IMR-90 (cell line): ENCODE measurements at regions of chr9 and their contacts with region 1.

Region 1: DNA sequence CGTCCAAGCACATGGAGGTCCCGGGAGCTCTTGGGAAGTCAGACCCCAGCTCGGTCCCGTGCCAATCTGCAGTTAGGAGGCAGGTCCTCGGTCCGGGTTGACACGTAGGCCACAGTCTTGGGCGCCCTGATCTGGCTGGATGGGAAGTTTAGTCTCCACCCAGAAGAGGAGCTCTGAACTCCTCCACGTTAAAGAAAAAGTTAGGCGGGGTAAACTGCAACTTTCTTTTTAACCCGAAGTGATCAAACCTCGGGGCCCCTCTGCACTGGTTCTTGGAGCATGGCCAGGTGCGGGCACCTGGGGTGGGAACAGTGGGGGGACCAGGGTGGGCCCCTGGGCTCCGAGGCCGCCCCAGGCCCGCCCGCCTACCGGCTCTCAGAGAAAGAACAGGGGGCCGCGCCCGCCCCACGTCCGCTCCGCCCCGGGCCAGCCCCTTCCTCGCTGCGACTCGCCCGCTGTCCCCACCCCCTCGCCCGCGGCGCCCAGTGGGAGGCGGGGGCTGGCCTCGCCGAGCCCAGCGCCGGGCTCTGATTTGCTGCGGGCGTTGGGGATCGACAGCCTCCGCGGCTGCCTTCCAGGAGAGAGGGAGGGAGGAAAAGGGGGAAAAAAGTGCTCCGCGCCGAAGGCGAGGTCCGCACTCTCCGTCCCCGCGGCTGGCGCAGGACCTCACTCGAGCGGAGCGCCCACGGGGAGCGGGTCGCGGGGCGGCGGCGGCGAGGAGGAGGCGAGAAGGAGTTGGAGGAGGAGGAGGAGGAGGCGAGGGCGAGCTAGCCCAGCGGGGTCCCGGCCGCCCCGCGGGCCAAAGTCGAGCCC is at the start of gene COL5A1:
- DNase-seq: peak; percentile 91
- ATAC-seq: peak; percentile 79
- H3K4me3 ChIP-seq: peak within 1 kb of the TSS; percentile 84
- H3K27ac ChIP-seq: peak within 1 kb of the TSS; percentile 99
- H3K4me1 ChIP-seq: peaks cover 22% of the 10 kb centered on the region
- H3K27me3 ChIP-seq: no peaks in the 10 kb centered on the region
- CTCF ChIP-seq: no peak; the same call in 1 of the 2 replicates
- POLR2A ChIP-seq: peak; percentile 96
- RAD21 ChIP-seq: no peak; the same call in 1 of the 2 replicates
- total RNA-seq, gene COL5A1: 19.2 and 21.1 TPM in 2 replicates

Region 2: GRCh38 chr9:134163353-134164196 is 477.8 kb before region 1 on chr9:
- CTCF ChIA-PET with region 1: no interaction called
- POLR2A ChIA-PET with region 1: no interaction called
- dilution Hi-C with region 1: no loop called
- in situ Hi-C with region 1: no loop called
- intact Hi-C with region 1: loop called (anchors 10 kb)
- DNase-seq: peak; percentile 22
- ATAC-seq: no peak
- H3K4me3 ChIP-seq: peak overlapping the region; percentile 24
- H3K27ac ChIP-seq: peak overlapping the region; percentile 67
- H3K4me1 ChIP-seq: peaks cover 5% of the 10 kb centered on the region
- H3K27me3 ChIP-seq: no peaks in the 10 kb centered on the region
- CTCF ChIP-seq: no peak
- POLR2A ChIP-seq: no peak
- RAD21 ChIP-seq: no peak

Region 3: GRCh38 chr9:134455934-134456739 is 185.2 kb before region 1 on chr9:
- CTCF ChIA-PET with region 1: interaction called, 5 read pairs
- POLR2A ChIA-PET with region 1: interaction called, 7 read pairs
- dilution Hi-C with region 1: no loop called
- in situ Hi-C with region 1: loop called (anchors 5 kb)
- intact Hi-C with region 1: loop called (anchors 1 kb)
- DNase-seq: peak; percentile 99
- ATAC-seq: peak; percentile 72
- H3K4me3 ChIP-seq: no peak overlapping the region
- H3K27ac ChIP-seq: peak overlapping the region; percentile 94
- H3K4me1 ChIP-seq: peaks cover 30% of the 10 kb centered on the region
- H3K27me3 ChIP-seq: no peaks in the 10 kb centered on the region
- CTCF ChIP-seq: no peak; the same call in 1 of the 2 replicates
- POLR2A ChIP-seq: peak; percentile 62; the same call in 1 of the 2 replicates
- RAD21 ChIP-seq: peak; percentile 50; the same call in 1 of the 2 replicates

Region 4: GRCh38 chr9:134502809-134503211 is 138.6 kb before region 1 on chr9:
- CTCF ChIA-PET with region 1: interaction called, 3 read pairs
- POLR2A ChIA-PET with region 1: interaction called, 3 read pairs
- dilution Hi-C with region 1: no loop called
- in situ Hi-C with region 1: no loop called
- intact Hi-C with region 1: loop called (anchors 2 kb)
- DNase-seq: peak; percentile 99
- ATAC-seq: peak; percentile 99
- H3K4me3 ChIP-seq: no peak overlapping the region
- H3K27ac ChIP-seq: peak overlapping the region; percentile 92
- H3K4me1 ChIP-seq: peaks cover 16% of the 10 kb centered on the region
- H3K27me3 ChIP-seq: no peaks in the 10 kb centered on the region
- CTCF ChIP-seq: no peak
- POLR2A ChIP-seq: peak; percentile 58
- RAD21 ChIP-seq: peak; percentile 50

Region 5: DNA sequence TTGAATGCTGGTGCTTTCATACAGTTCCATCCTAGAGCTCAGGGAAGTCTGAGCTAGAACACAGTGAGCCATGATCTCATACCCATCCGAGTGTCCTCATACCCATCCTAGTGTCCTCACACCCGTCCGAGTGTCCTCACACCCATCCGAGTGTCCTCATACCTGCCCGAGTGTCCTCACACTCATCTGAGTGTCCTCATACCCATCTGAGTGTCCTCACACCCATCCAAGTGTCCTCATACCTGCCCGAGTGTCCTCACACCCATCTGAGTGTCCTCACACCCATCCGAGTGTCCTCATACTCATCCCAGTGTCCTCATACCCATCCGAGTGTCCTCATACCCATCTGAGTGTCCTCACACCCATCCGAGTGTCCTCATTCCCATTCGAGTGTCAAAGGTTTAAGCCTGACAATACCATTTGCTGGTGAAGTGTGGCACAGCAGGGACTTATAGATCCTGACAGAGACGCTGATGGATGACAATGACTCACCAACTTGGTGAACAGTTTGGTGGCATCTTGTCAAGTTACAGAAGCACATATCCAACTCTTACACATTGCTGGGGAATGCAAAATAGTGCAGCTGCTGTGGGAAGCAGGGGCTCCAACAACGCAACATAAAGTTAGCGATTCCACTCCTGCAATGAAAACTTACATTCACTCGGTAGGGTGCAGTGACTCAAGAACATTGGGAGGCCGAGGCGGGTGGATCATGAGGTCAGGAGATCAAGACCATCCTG is 76.8 kb before region 1 on chr9:
- CTCF ChIA-PET with region 1: no interaction called
- POLR2A ChIA-PET with region 1: interaction called, 4 read pairs
- dilution Hi-C with region 1: no loop called
- in situ Hi-C with region 1: no loop called
- intact Hi-C with region 1: loop called (anchors 5 kb)
- DNase-seq: peak; percentile 94
- ATAC-seq: peak; percentile 60
- H3K4me3 ChIP-seq: no peak overlapping the region
- H3K27ac ChIP-seq: no peak overlapping the region
- H3K4me1 ChIP-seq: peaks cover 11% of the 10 kb centered on the region
- H3K27me3 ChIP-seq: no peaks in the 10 kb centered on the region
- CTCF ChIP-seq: no peak
- POLR2A ChIP-seq: no peak
- RAD21 ChIP-seq: no peak

Region 6: GRCh38 chr9:134575525-134576176 is 65.7 kb before region 1 on chr9:
- CTCF ChIA-PET with region 1: no interaction called
- POLR2A ChIA-PET with region 1: no interaction called
- dilution Hi-C with region 1: no loop called
- in situ Hi-C with region 1: no loop called
- intact Hi-C with region 1: no loop called
- DNase-seq: no peak
- ATAC-seq: peak; percentile 40
- H3K4me3 ChIP-seq: no peak overlapping the region
- H3K27ac ChIP-seq: no peak overlapping the region
- H3K4me1 ChIP-seq: peaks cover 14% of the 10 kb centered on the region
- H3K27me3 ChIP-seq: 0 out of 2 replicates have a peak, but pooled peaks cover 1% of the 10 kb centered on the region
- CTCF ChIP-seq: no peak
- POLR2A ChIP-seq: no peak
- RAD21 ChIP-seq: no peak

Region 7: GRCh38 chr9:134660407-134660806 is 19.0 kb after region 1 on chr9:
- CTCF ChIA-PET with region 1: no interaction called
- POLR2A ChIA-PET with region 1: no interaction called
- dilution Hi-C with region 1: no loop called
- in situ Hi-C with region 1: no loop called
- intact Hi-C with region 1: loop called (anchors 2 kb)
- DNase-seq: no peak
- ATAC-seq: no peak
- H3K4me3 ChIP-seq: no peak overlapping the region
- H3K27ac ChIP-seq: no peak overlapping the region; the same call in 1 of the 2 replicates
- H3K4me1 ChIP-seq: peaks cover 26% of the 10 kb centered on the region
- H3K27me3 ChIP-seq: no peaks in the 10 kb centered on the region
- CTCF ChIP-seq: peak; percentile 49
- POLR2A ChIP-seq: no peak
- RAD21 ChIP-seq: no peak